IMR-90 (cell line): ENCODE measurements at regions of chr10 and their contacts with region 1.

Region 1: DNA sequence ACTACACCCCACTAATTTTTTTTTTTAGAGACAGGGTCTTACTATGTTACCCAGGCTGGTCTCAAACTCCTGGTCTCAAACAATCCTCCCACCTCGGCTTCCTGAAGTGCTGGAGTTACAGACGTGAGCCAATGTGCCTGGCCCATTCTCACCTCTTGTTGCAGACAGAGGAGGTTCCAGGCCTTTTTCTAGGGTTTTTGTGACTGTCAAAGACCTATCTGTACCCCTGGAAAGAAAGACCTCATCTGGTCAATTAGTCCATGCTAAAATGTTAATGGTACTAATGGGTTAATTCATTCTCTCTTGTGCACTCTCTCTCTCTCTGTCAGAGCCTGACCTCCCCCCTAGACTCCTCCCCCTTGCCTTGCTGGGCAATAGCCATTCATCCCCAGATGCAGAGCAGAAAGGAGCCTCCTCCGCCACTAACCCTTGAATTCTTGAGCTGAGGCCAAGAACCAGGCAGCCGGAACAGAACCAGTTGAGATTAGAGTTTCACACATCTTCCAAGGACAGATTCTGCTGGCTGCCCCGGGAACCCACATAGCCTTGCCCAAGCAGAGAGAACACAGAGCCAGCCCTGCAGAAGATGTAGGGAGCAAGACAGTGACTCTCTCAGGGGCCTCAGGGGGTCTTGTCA is 209.7 kb downstream of the SKIDA1 start:
- DNase-seq: peak; percentile 86
- ATAC-seq: peak; percentile 87
- H3K4me3 ChIP-seq: no peak overlapping the region
- H3K27ac ChIP-seq: peak overlapping the region; percentile 78
- H3K4me1 ChIP-seq: peaks cover 27% of the 10 kb centered on the region
- H3K27me3 ChIP-seq: no peaks in the 10 kb centered on the region
- CTCF ChIP-seq: no peak
- POLR2A ChIP-seq: no peak
- RAD21 ChIP-seq: no peak

Region 2: GRCh38 chr10:21292763-21293517 is 22.8 kb before region 1 on chr10:
- CTCF ChIA-PET with region 1: no interaction called
- POLR2A ChIA-PET with region 1: no interaction called
- dilution Hi-C with region 1: no loop called
- in situ Hi-C with region 1: no loop called
- intact Hi-C with region 1: loop called (anchors 2 kb)
- DNase-seq: peak; percentile 98
- ATAC-seq: peak; percentile 94
- H3K4me3 ChIP-seq: peak overlapping the region; percentile 13
- H3K27ac ChIP-seq: peak overlapping the region; percentile 72
- H3K4me1 ChIP-seq: peaks cover 2% of the 10 kb centered on the region; the same call in 1 of the 2 replicates
- H3K27me3 ChIP-seq: no peaks in the 10 kb centered on the region
- CTCF ChIP-seq: no peak
- POLR2A ChIP-seq: no peak
- RAD21 ChIP-seq: peak; percentile 14; the same call in 1 of the 2 replicates

Region 3: DNA sequence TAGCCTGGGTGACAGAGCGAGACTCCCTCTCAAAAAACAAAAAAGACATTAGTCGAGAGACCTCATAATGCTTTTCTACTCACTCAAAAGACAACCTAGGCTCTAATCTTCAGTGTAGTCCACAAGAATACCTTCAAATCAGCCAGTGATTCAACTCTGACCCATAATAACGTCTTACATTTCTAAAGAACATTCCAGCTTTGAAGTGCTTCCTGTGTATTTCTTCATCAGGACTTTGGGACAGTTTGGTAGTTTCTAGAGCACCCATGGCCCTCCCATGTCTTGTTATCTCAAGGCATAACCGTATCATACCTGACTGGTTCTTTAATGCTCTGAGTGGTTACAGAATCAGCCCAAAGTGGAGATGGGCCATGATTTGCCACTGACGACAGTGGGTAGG is 11.6 kb before region 1 on chr10:
- CTCF ChIA-PET with region 1: no interaction called
- POLR2A ChIA-PET with region 1: no interaction called
- dilution Hi-C with region 1: no loop called
- in situ Hi-C with region 1: no loop called
- intact Hi-C with region 1: no loop called
- DNase-seq: peak; percentile 39
- ATAC-seq: no peak
- H3K4me3 ChIP-seq: no peak overlapping the region
- H3K27ac ChIP-seq: no peak overlapping the region
- H3K4me1 ChIP-seq: no peaks in the 10 kb centered on the region; the same call in 1 of the 2 replicates
- H3K27me3 ChIP-seq: no peaks in the 10 kb centered on the region
- CTCF ChIP-seq: no peak
- POLR2A ChIP-seq: no peak
- RAD21 ChIP-seq: no peak